SK-N-SH (cell line): ENCODE measurements at regions of chr7 and their contacts with region 1.

Region 1: DNA sequence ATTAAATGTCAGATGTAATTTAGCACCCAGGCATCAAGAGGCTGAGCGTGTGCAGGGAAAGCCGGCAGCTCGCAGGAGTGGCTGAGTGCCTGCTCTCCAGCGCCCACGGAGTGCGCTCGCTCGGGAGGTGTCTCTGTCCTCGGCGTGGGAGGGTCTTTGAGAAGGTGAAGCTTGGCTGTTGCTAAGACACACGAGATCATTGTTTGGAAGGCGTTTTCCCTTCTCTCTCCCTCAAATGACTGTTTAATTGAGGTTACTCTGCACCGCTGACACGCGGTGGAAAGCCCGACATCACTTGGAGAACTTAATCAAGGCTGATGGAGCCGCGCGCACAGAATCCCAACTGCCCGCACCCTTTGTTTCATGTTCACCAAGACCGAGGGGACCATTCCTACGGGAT is 414.6 kb downstream of the DNAJB6 start:
- DNase-seq: no peak
- H3K4me3 ChIP-seq: no peak overlapping the region; a peak in 1 of 4 replicates
- H3K27ac ChIP-seq: peak overlapping the region in 1 of 2 experiments; percentile 98; a peak in 2 of 4 replicates
- H3K4me1 ChIP-seq: peaks cover 0 to 43% of the 10 kb centered on the region in 2 experiments; a peak in 1 of 4 replicates
- H3K27me3 ChIP-seq: no peaks in the 10 kb centered on the region
- CTCF ChIP-seq: no peak
- EP300 ChIP-seq: no peak
- RAD21 ChIP-seq: no peak

Region 2: DNA sequence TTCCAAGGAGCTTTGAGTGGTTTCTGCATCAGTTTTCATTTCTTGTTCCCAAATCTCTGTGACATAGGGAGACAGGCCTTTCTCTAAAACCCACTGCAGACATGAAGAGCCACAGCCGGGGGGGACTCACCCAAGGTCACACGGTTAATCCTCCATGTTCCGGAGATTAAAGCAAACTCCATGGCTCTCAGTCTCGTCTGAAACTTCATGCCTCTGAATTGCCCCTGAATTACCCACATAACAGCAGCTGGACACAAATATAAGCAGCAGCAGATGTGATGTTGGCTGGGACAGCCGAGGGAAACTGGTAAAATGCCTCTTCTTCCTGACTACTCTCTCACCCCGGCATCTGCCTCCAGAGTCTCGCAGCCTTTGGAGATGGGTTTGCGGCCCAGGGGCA is 12.4 kb before region 1 on chr7:
- CTCF ChIA-PET with region 1: interaction called, 13 read pairs
- POLR2A ChIA-PET with region 1: interaction called, 5 read pairs
- DNase-seq: no peak
- H3K4me3 ChIP-seq: no peak overlapping the region
- H3K27ac ChIP-seq: no peak overlapping the region
- H3K4me1 ChIP-seq: peaks cover 0 to 6% of the 10 kb centered on the region in 2 experiments; a peak in 1 of 4 replicates
- H3K27me3 ChIP-seq: no peaks in the 10 kb centered on the region
- CTCF ChIP-seq: no peak
- EP300 ChIP-seq: no peak
- RAD21 ChIP-seq: no peak